ENCODE measurements at regions of chr1 and their contacts with region 1.

Region 1: GRCh38 chr1:172398970-172399755 is 21.3 kb upstream of the C1orf105 start:
- DNase-seq: no peak
- H3K4me3 ChIP-seq: peak overlapping the region; percentile 13 to 37 (median 15)
- H3K27ac ChIP-seq: peak overlapping the region; percentile 75 to 82 (median 82)
- H3K4me1 ChIP-seq: peaks cover 29 to 67% (median 57%) of the 10 kb centered on the region in 4 donors
- H3K27me3 ChIP-seq: no peaks in the 10 kb centered on the region
- CTCF ChIP-seq: peak; percentile 64 to 82 (median 77)
- EP300 ChIP-seq: no peak
- POLR2A ChIP-seq: no peak

Region 2: GRCh38 chr1:172002725-172003345 is 396.3 kb before region 1 on chr1:
- intact Hi-C with region 1: loop called (anchors 5 kb)
- DNase-seq: no peak
- H3K4me3 ChIP-seq: no peak overlapping the region
- H3K27ac ChIP-seq: no peak overlapping the region
- H3K4me1 ChIP-seq: peaks cover 0 to 2% (median 0%) of the 10 kb centered on the region in 4 donors
- H3K27me3 ChIP-seq: no peaks in the 10 kb centered on the region
- CTCF ChIP-seq: peak; percentile 57 to 76 (median 69)
- EP300 ChIP-seq: no peak
- POLR2A ChIP-seq: no peak

Region 3: DNA sequence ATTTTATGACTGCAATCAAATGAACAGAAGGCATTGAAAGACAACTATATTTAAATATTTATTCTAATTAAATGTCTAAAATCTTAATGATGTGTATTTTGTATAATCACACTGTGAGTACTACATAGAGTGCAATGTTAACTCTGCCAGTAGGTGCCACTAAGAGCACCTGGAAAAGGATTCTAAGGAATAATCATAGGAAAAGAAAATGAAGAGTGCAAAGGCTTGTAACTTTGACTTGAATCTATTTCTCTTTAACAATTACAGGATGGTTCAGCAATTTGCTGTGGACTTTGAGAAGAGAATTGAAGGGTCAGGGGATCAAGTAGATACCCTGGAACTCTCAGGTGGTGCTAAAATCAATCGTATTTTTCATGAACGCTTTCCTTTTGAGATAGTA is 357.4 kb before region 1 on chr1:
- intact Hi-C with region 1: loop called (anchors 2 kb)
- DNase-seq: no peak
- H3K4me3 ChIP-seq: no peak overlapping the region
- H3K27ac ChIP-seq: no peak overlapping the region
- H3K4me1 ChIP-seq: no peaks in the 10 kb centered on the region
- H3K27me3 ChIP-seq: no peaks in the 10 kb centered on the region
- CTCF ChIP-seq: peak; percentile 44 to 51 (median 47)
- EP300 ChIP-seq: no peak
- POLR2A ChIP-seq: no peak

Region 4: DNA sequence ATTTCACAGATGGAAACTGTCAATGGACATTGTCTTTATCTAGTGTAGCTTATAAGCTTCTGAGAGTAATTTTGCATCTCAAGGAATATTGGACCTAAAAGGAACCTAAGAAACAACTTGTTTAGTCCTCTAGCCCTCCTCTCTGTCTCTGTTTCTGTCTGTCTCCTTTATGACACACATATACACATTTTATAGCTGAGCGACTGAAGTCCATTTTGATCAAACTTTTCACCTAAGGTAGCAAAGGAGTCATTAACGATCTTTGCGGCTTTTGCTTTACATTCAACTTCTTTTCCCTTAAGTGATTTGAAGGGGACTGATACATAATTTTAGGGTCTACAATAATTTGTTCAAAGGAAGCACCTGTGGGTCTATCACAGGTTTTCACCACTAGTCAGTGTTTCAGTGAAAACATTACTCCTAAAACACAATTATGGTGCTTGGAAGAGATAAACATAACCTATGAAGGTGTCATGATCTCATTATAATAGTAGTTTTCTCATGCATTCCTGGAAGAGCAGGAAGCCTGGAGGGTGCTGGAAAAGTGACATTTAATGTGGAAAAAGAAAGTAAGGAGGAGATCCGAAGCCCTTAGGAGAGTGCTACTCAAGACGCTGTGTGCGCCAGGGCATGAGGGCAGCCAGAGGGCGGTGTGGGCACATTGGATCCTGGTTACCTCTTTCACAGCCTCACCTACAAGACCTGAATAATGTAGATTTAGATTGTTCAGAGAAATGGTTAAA is 309.2 kb before region 1 on chr1:
- intact Hi-C with region 1: loop called (anchors 1 kb)
- DNase-seq: no peak
- H3K4me3 ChIP-seq: no peak overlapping the region
- H3K27ac ChIP-seq: no peak overlapping the region
- H3K4me1 ChIP-seq: no peaks in the 10 kb centered on the region
- H3K27me3 ChIP-seq: no peaks in the 10 kb centered on the region
- CTCF ChIP-seq: peak; percentile 75 to 79 (median 75)
- EP300 ChIP-seq: no peak
- POLR2A ChIP-seq: no peak

Region 5: DNA sequence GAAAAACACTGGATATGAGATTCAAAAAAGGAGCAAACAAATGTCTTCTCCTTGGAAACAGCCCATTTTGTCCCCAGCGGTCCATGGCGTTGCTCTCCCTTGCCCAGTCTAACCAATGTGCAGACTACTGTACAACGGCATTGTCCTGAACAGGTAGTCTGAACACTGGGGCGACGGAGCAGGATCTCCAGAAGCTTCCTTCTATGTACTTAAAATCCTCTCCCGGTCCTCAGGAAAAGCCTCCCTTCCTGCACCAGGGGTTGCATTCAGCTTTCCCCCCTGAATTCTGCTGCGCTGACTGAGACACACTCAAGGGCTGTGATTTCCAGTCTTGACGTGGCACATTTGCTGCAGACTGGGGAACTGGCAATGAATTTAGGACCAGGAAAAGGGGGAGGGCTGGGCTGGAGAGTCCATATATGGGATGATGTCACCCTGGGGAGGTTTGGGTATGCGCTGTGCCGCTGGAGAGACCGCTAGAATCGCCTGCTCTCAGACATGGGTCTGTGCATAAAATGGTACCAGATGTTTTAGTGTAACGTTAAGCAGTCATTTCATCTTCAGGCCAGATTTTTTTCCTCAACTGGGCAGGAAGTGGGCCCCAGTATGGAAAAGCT is 254.6 kb before region 1 on chr1:
- intact Hi-C with region 1: loop called (anchors 2 kb)
- DNase-seq: peak; percentile 94
- H3K4me3 ChIP-seq: peak overlapping the region; percentile 54 to 68 (median 62)
- H3K27ac ChIP-seq: peak overlapping the region; percentile 85 to 88 (median 86)
- H3K4me1 ChIP-seq: peaks cover 0 to 27% (median 23%) of the 10 kb centered on the region in 4 donors
- H3K27me3 ChIP-seq: no peaks in the 10 kb centered on the region
- CTCF ChIP-seq: no peak
- EP300 ChIP-seq: no peak
- POLR2A ChIP-seq: peak; percentile 23

Region 6: GRCh38 chr1:172269644-172270043 is 129.5 kb before region 1 on chr1:
- intact Hi-C with region 1: no loop called
- DNase-seq: no peak
- H3K4me3 ChIP-seq: no peak overlapping the region
- H3K27ac ChIP-seq: peak overlapping the region; percentile 11 to 50 (median 44)
- H3K4me1 ChIP-seq: peaks cover 4 to 23% (median 16%) of the 10 kb centered on the region in 4 donors
- H3K27me3 ChIP-seq: no peaks in the 10 kb centered on the region
- CTCF ChIP-seq: no peak
- EP300 ChIP-seq: no peak
- POLR2A ChIP-seq: no peak

Region 7: DNA sequence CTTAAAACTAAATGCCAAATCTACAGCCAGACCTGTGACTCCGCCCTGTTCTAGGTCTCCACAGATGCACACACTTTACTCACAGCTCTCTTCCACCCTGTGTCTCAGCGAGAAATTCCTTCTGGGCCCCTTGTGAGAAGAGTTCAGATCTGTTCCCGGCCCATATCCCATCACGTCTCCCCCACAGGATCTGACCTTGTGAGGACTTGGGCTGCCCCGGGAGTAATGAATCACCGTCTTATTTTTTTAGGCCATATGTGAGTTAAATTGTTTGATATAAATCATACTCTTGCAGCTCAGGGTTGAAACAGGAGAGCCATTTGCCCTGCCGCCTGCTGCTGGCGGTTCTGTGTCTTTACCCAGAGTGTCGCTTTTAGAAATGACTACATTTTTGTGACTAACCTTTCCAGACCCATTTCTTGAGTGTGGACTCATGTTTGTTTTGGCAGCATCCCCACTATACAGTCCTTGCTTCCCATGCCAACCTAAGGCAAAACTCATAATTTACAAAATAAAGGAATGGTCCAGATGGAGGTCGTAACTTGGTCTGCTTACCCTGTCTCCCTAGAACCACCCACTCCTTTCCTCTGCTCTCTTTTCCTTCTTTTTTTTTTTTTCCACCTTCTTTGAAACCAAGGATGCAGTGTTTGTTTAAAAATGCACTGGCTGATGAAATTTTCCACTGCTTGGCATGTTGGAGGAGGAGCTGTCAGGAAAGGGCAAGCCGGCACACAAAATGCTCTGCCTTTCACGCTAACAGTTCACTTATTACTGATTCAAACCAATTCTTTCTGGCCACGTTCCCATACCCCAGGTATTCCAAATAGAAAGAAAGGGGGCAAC is 76.7 kb before region 1 on chr1:
- intact Hi-C with region 1: loop called (anchors 10 kb)
- DNase-seq: no peak
- H3K4me3 ChIP-seq: peak overlapping the region; percentile 6 to 39 (median 26)
- H3K27ac ChIP-seq: peak overlapping the region; percentile 78 to 84 (median 80)
- H3K4me1 ChIP-seq: peaks cover 13 to 46% (median 45%) of the 10 kb centered on the region in 4 donors
- H3K27me3 ChIP-seq: no peaks in the 10 kb centered on the region
- CTCF ChIP-seq: no peak
- EP300 ChIP-seq: no peak
- POLR2A ChIP-seq: no peak

Region 8: GRCh38 chr1:172357753-172358385 is 41.3 kb before region 1 on chr1:
- intact Hi-C with region 1: loop called (anchors 5 kb)
- DNase-seq: no peak
- H3K4me3 ChIP-seq: peak overlapping the region; percentile 20 to 41 (median 32)
- H3K27ac ChIP-seq: peak overlapping the region; percentile 78 to 83 (median 80)
- H3K4me1 ChIP-seq: peaks cover 35 to 53% (median 51%) of the 10 kb centered on the region in 4 donors
- H3K27me3 ChIP-seq: no peaks in the 10 kb centered on the region
- CTCF ChIP-seq: no peak
- EP300 ChIP-seq: no peak
- POLR2A ChIP-seq: no peak

Region 9: GRCh38 chr1:172602706-172603105 is 203.5 kb after region 1 on chr1:
- intact Hi-C with region 1: no loop called
- DNase-seq: no peak
- H3K4me3 ChIP-seq: no peak overlapping the region
- H3K27ac ChIP-seq: no peak overlapping the region
- H3K4me1 ChIP-seq: no peaks in the 10 kb centered on the region
- H3K27me3 ChIP-seq: no peaks in the 10 kb centered on the region
- CTCF ChIP-seq: no peak
- EP300 ChIP-seq: no peak
- POLR2A ChIP-seq: no peak

Region 10: DNA sequence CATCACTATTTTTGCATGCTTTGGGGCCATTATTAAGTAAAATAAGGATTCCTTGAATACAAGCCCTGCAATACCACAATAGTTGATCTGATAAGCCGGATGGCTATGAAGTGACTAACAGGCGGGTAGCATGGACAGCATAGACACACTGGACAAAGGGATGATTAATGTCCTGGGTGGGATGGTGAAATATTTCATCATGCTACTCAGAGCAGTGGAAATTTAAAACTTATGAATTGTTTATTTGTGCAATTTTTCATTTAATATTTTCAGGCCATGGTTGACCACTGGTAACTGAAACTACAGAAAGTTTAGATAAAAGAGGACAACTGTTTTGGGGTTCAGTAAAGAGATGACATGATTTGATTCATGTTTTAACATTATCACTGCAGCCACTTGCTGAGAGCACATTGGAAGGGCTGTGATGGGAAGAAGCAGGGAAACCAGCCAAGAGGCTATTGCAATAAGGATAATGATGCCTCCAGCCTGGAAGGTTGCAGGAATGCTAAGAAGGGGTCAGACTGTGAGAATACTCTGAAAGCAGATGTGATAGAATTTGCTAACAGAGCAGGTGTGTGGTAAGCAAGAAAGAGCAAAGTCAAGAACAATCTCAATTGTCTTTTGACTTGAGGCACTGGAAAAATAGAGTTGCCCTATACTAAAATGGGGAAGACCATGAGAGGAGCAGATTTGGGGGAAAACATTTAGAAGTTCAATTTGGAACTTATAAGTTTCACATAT is 870.5 kb after region 1 on chr1:
- intact Hi-C with region 1: no loop called
- DNase-seq: no peak
- H3K4me3 ChIP-seq: no peak overlapping the region
- H3K27ac ChIP-seq: no peak overlapping the region
- H3K4me1 ChIP-seq: no peaks in the 10 kb centered on the region
- H3K27me3 ChIP-seq: no peaks in the 10 kb centered on the region
- CTCF ChIP-seq: no peak
- EP300 ChIP-seq: no peak
- POLR2A ChIP-seq: no peak

Measured in esophagus muscularis mucosa (tissue), 4 donors.